ENCODE measurements at regions of chr2 and their contacts with region 1.

Region 1: GRCh38 chr2:241702132-241703031 is 543 bp downstream of the ING5 start:
- DNase-seq: peak; percentile 9
- H3K4me3 ChIP-seq: peak overlapping the region; percentile 87
- H3K27me3 ChIP-seq: no peaks in the 10 kb centered on the region
- CTCF ChIP-seq: peak; percentile 48

Region 2: DNA sequence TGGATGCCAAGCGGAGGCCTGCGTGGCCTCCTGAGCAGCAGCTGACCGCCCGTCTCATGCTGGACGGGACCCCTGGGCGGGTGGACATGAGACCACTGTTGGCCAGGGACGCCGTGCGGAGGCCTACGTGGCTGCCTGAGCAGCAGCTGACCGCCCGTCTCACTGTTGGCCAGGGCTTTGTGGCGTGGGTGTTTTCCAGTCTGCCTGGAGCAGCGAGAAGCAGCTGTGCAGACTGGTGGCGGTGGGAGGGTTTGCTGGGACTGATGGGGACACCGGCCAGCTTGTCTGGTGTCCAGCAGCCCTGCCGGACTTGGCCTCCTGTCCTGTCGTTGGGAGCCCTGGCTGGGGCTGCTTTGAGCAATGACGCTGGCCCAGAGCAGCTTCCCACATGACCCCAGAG is 26.2 kb after region 1 on chr2:
- CTCF ChIA-PET with region 1: interaction called, 18 read pairs
- POLR2A ChIA-PET with region 1: no interaction called
- DNase-seq: no peak
- H3K4me3 ChIP-seq: no peak overlapping the region
- H3K27me3 ChIP-seq: no peaks in the 10 kb centered on the region
- CTCF ChIP-seq: no peak

Region 3: GRCh38 chr2:241734467-241735208 is 32.3 kb after region 1 on chr2 and contains the start of gene D2HGDH:
- CTCF ChIA-PET with region 1: interaction called, 18 read pairs
- POLR2A ChIA-PET with region 1: no interaction called
- DNase-seq: peak; percentile 11
- H3K4me3 ChIP-seq: peak within 1 kb of the TSS; percentile 82
- H3K27me3 ChIP-seq: no peaks in the 10 kb centered on the region
- CTCF ChIP-seq: no peak
- polyA plus RNA-seq, gene D2HGDH: 8.0 and 16.1 TPM in 2 replicates